Posterior vena cava (tissue), 2 donors: ENCODE measurements at regions of chr20 and their contacts with region 1.

Region 1: DNA sequence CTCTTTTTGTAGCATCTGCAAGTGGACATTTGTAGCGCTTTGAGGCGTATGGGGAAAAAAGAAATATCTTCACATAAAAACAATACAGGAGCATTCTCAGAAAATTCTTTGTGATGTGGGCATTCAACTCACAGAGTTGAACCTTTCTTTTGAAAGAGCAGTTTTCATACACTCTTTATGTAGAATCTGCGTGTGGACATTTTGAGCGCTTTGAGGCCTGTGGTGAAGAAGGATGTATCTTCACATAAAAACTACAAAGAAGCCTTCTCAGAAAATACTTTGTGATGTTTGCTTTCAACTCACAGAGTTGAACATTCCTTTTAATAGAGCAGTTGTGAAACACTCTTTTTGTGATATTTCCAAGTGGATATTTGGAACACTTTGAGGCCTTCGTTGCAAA is 598.4 kb upstream of the ZNF337 start:
- DNase-seq: no peak

Region 2: DNA sequence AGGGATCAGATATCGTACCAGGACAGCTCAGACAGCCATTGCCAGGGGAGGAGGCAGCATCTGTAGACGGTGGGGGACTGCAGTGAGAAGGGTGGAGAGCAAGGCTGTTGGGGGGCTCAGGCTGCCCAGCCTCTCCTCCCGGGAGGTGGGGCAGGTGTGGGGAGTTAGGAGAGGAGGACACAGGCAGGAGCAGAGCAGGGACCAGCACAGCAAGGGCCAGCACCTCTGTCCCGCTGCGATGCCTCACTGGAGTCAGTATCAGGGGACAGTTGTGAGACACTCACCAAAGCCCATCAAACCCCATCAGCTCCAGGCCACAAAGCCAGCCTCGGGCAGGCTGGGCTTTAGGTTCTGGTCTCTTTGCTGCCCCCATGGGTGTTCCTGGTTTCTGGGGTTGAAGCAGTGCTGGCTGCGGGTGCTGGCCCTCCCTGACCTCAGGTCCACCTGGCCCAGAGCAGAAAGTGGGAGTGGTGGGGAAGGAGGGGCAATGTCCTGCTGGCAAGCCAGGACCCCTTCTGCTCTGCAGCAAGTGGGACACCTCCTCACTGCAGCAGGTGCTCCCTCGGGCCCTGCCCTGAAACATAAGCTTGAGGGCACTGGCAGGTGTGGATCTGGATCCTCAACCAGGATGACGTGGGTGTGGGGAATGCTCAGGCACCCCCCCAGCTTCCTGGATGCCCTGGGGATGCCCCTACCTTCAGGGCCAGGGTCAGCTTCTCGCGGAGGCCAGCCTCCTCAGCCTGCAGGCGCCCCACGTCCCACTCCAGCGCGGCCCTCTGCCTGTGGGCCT is 804.2 kb before region 1 on chr20:
- intact Hi-C with region 1: loop called in 1 of 2 experiments (anchors 5 kb)
- DNase-seq: no peak

Region 3: GRCh38 chr20:26167499-26167898 is 127.5 kb before region 1 on chr20:
- intact Hi-C with region 1: no loop called
- DNase-seq: no peak